B cell (primary cell): ENCODE measurements at regions of chr11 and their contacts with region 1.

Region 1: DNA sequence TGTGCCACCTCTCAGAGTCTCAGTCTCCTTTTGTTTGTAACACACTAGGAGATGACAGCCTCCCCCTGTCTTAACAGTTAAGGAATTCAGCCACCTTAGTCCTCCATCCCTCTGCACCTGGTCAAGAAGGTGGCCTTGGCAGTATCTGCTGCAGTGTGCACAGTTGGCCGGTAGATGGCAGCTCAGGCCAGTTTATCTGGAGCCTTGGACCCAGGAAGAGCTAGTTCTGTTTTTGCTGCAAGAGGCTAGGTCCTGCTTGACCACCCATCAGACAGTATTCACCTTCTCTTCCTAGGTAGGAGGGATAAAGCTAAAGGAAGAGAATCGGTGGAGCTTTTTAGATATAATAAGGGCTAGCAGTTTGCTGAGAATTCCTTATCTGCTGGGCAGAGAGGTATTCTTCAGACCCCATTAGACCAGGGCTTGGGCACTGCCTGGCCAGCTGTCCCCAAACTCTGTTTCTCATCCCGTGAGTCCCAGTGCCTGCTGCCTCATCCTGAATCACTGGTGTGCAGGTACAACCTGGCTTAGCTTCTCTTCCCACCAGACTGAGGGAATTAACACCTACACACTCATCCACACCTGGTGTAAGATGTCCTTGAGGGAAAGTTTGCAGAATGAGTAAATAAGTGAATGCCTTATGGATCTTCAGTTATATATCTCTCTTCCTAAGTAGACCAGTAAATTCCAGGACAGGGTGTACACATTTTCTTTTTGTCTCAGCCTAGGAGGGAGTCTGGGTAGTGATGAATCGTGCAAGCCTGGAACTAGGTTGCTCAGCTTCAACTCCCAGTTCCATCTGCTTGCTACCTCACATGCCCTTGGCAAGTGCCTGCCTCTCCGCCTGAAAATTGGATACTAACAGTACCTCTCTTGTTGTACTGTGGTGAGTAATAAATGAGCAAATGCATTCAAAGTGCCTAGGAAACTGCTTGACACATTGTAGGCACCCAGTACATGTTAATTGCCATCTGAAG is 70.8 kb upstream of the NARS2 start:
- DNase-seq: peak; percentile 66
- ATAC-seq: peak; percentile 74
- H3K4me3 ChIP-seq: no peak overlapping the region
- H3K4me3 Mint-ChIP-seq: no peak overlapping the region
- H3K27ac ChIP-seq: no peak overlapping the region
- H3K27ac Mint-ChIP-seq: no peak overlapping the region
- H3K4me1 ChIP-seq: no peaks in the 10 kb centered on the region
- H3K4me1 Mint-ChIP-seq: no peaks in the 10 kb centered on the region
- H3K27me3 ChIP-seq: no peaks in the 10 kb centered on the region
- H3K27me3 Mint-ChIP-seq: peaks cover 23% of the 10 kb centered on the region
- CTCF ChIP-seq: peak; percentile 97

Region 2: GRCh38 chr11:78664636-78665035 is 19.1 kb after region 1 on chr11:
- CTCF ChIA-PET with region 1: interaction called, 26 read pairs
- POLR2A ChIA-PET with region 1: no interaction called
- intact Hi-C with region 1: no loop called
- DNase-seq: no peak
- ATAC-seq: no peak
- H3K4me3 ChIP-seq: no peak overlapping the region
- H3K4me3 Mint-ChIP-seq: no peak overlapping the region
- H3K27ac ChIP-seq: no peak overlapping the region
- H3K27ac Mint-ChIP-seq: no peak overlapping the region
- H3K4me1 ChIP-seq: no peaks in the 10 kb centered on the region
- H3K4me1 Mint-ChIP-seq: no peaks in the 10 kb centered on the region
- H3K27me3 ChIP-seq: peaks cover 0 to 2% (median 0%) of the 10 kb centered on the region in 4 experiments
- H3K27me3 Mint-ChIP-seq: peaks cover 7% of the 10 kb centered on the region
- CTCF ChIP-seq: no peak

Region 3: GRCh38 chr11:79076526-79077115 is 431.1 kb after region 1 on chr11:
- CTCF ChIA-PET with region 1: interaction called, 16 read pairs
- POLR2A ChIA-PET with region 1: no interaction called
- intact Hi-C with region 1: no loop called
- DNase-seq: peak; percentile 19
- ATAC-seq: no peak
- H3K4me3 ChIP-seq: no peak overlapping the region
- H3K4me3 Mint-ChIP-seq: no peak overlapping the region
- H3K27ac ChIP-seq: no peak overlapping the region
- H3K27ac Mint-ChIP-seq: no peak overlapping the region
- H3K4me1 ChIP-seq: no peaks in the 10 kb centered on the region
- H3K4me1 Mint-ChIP-seq: no peaks in the 10 kb centered on the region
- H3K27me3 ChIP-seq: no peaks in the 10 kb centered on the region
- H3K27me3 Mint-ChIP-seq: no peaks in the 10 kb centered on the region
- CTCF ChIP-seq: peak; percentile 21

Region 4: GRCh38 chr11:79493555-79494171 is 848.1 kb after region 1 on chr11:
- CTCF ChIA-PET with region 1: interaction called, 41 read pairs
- POLR2A ChIA-PET with region 1: no interaction called
- intact Hi-C with region 1: no loop called
- DNase-seq: peak; percentile 70
- ATAC-seq: peak; percentile 60
- H3K4me3 ChIP-seq: no peak overlapping the region
- H3K4me3 Mint-ChIP-seq: no peak overlapping the region
- H3K27ac ChIP-seq: no peak overlapping the region
- H3K27ac Mint-ChIP-seq: no peak overlapping the region
- H3K4me1 ChIP-seq: no peaks in the 10 kb centered on the region
- H3K4me1 Mint-ChIP-seq: no peaks in the 10 kb centered on the region
- H3K27me3 ChIP-seq: peaks cover 0 to 3% (median 0%) of the 10 kb centered on the region in 4 experiments
- H3K27me3 Mint-ChIP-seq: peaks cover 12% of the 10 kb centered on the region
- CTCF ChIP-seq: peak; percentile 86